Astrocyte of the cerebellum (primary cell): ENCODE measurements at regions of chr5 and their contacts with region 1.

Region 1: DNA sequence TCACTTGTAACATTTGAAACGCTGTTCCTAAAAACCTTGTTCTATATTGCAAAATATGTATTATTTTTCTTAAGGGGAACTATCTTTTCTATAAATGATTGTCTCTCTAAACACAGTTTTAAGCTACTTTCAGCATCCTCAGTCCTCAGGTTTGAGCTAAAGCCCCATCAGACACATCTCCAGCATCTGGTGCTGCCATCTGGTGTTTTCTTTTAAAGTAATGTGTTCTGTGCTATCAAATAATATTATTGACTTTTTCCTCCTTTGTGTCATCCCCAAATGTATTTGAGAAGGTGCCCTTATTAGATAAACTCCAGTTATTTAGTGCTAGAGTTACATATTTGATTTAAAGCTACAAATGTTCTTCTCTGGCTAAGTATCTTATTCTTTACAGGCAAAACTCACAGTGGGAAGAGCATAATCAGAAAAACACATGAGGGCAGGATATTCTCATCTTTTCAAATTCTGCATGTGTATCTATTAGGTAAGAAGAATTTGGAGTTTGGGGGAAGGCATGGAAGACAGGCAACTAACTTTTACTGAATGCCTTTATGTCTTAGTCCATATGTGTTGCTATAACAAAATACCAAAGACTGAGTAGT is 27.5 kb downstream of the ZNF474 start:
- DNase-seq: peak; percentile 70
- H3K4me3 ChIP-seq: no peak overlapping the region
- CTCF ChIP-seq: peak; percentile 52

Region 2: DNA sequence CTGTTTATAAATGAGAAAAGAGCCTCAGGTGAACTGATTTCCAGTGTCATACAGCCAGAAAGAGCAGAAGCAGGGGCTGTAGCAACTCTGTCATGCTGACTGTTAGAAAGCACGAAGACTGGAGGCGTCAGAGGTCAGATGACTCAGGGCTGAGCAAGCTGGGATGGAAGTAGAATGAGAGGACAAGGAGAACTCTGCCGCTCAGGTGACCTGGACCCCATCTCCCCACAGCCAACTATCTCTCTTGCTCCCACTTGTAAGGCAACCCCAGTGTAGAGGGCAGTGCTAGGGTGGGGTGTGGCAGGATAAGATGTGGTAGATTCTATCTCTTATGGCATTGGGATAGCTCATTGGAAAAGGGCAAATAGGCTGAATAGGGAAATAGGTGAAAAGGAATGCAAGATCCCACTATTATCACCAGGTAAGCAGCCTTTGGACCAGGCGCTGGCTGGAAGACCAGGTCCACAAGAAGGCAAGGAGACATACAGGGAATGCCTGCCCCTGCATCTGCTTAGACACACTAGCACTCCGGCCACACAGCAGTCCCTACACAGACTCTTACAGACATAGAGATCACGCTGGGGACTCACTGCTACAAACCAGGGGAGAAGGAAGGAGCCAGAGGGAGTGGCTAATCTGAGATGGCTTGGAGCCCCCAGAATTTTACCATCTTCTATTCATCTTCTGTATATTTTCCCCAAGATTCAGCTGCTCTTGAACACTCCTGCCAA is 57.6 kb before region 1 on chr5:
- in situ Hi-C with region 1: loop called (anchors 5 kb)
- DNase-seq: no peak
- H3K4me3 ChIP-seq: no peak overlapping the region
- CTCF ChIP-seq: no peak

Region 3: DNA sequence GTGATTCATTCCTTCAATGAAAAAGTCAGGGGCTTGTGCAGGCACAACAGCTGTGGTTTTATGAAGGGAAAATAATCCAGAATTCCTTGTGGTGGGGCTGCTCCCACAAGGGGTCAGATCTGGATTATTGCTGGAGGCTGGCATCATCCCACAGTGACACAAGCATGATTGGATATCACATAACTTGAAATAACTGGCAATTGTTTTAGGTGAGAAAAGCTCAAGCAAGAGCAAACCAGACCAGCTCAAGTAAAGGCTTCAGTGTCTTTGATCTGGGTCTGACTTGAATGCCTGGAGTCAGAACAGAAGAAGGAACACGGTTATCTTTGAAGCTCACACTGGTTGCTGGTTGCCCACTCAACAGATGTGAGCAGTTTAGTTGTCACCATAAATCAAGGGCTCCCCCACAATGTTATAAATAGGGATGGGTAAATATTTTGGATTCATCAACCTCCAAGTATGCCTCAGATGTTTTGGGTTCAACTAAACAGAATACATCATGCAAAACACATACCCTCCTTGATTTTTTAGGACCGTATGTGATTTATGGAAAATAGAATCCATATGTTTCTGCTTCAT is 30.6 kb before region 1 on chr5:
- in situ Hi-C with region 1: no loop called
- DNase-seq: peak; percentile 64
- H3K4me3 ChIP-seq: no peak overlapping the region
- CTCF ChIP-seq: no peak

Region 4: GRCh38 chr5:122835681-122836080 is 678.9 kb after region 1 on chr5:
- in situ Hi-C with region 1: no loop called
- DNase-seq: no peak
- H3K4me3 ChIP-seq: no peak overlapping the region
- CTCF ChIP-seq: no peak